ENCODE measurements at regions of chr3 and their contacts with region 1.

Region 1: DNA sequence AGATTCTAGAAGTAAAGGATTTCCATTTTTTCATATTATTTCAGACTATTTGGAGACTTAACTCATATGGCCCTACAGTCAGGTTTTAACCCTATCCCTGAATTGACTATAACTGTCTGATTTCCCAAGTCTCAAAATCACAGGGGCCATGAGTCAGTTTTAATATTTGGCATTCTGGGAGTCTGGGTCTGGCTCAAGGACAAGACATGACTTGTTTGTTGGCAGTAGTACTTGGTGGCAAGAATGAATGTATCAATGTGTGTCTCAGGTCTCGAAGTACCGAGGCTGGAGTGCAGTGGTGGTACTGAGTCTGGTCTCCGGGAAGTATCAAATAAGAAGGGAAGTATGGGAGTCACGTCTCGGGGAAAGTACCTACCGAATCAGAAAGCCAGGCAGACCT is 10.8 kb downstream of the UMPS start:
- DNase-seq: no peak
- H3K4me3 Mint-ChIP-seq: no peak overlapping the region
- H3K27ac Mint-ChIP-seq: no peak overlapping the region
- H3K4me1 Mint-ChIP-seq: peaks cover 3% of the 10 kb centered on the region
- H3K27me3 Mint-ChIP-seq: no peaks in the 10 kb centered on the region

Region 2: GRCh38 chr3:124730129-124730940 is 10.7 kb before region 1 on chr3 and contains the start of gene UMPS:
- CTCF ChIA-PET with region 1: interaction called, 3 read pairs
- POLR2A ChIA-PET with region 1: interaction called, 15 read pairs
- DNase-seq: peak; percentile 93
- H3K4me3 Mint-ChIP-seq: peak within 1 kb of the TSS; percentile 100
- H3K27ac Mint-ChIP-seq: peak within 1 kb of the TSS; percentile 98
- H3K4me1 Mint-ChIP-seq: peaks cover 38% of the 10 kb centered on the region
- H3K27me3 Mint-ChIP-seq: peaks cover 6% of the 10 kb centered on the region
- total RNA-seq, gene UMPS: 23.3 to 26.3 TPM

Region 3: GRCh38 chr3:124752051-124752450 is 11.0 kb after region 1 on chr3:
- CTCF ChIA-PET with region 1: no interaction called
- POLR2A ChIA-PET with region 1: no interaction called
- DNase-seq: no peak
- H3K4me3 Mint-ChIP-seq: no peak overlapping the region
- H3K27ac Mint-ChIP-seq: no peak overlapping the region
- H3K4me1 Mint-ChIP-seq: no peaks in the 10 kb centered on the region
- H3K27me3 Mint-ChIP-seq: no peaks in the 10 kb centered on the region

Measured in activated CD4-positive, alpha-beta memory T cell treated with anti-CD3 and anti-CD28 coated beads, Interleukin-2, amount 10 ng/mL, durations not matched to agents 7 days and 5 days (primary cell).